ENCODE measurements at regions of chr2 and their contacts with region 1.

Region 1: GRCh38 chr2:86298411-86299379 is 38.7 kb downstream of the REEP1 start:
- DNase-seq: no peak
- H3K4me3 ChIP-seq: no peak overlapping the region
- H3K27ac ChIP-seq: no peak overlapping the region
- H3K4me1 ChIP-seq: no peaks in the 10 kb centered on the region
- CTCF ChIP-seq: no peak

Region 2: DNA sequence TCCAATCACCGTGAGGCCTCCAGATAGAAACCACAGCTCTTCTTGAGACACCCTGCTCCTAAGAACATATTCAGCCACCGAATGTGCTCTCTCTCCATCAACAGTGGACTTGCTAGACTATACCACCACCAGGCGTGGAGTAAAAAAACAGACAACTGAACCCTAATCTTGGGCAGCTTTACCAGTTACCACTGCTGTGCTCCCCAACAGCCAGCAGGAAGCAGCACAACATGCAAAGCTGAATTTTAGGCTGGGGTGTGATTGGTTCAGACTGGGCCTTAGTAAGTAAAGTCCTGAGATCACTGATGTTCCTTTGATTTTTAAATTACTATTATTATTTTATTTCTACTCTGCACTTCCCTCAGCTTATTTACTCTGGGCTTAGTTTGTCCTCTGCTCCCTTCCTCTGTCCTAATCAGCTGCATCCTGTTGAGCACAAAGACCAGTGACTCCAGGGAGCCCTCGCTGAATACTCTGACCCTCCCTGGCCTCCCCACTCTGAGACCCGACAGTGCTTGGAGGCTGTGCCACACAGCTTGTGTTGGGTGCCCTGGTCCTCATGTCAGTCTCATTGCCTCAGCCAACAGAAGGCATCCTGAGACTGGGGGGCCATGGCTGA is 77.5 kb before region 1 on chr2:
- CTCF ChIA-PET with region 1: no interaction called
- POLR2A ChIA-PET with region 1: no interaction called
- intact Hi-C with region 1: loop called (anchors 5 kb)
- DNase-seq: peak; percentile 72
- H3K4me3 ChIP-seq: no peak overlapping the region
- H3K27ac ChIP-seq: no peak overlapping the region
- H3K4me1 ChIP-seq: peaks cover 24% of the 10 kb centered on the region
- CTCF ChIP-seq: peak; percentile 89